Mammary epithelial cell (primary cell): ENCODE measurements at regions of chr3 and their contacts with region 1.

Region 1: DNA sequence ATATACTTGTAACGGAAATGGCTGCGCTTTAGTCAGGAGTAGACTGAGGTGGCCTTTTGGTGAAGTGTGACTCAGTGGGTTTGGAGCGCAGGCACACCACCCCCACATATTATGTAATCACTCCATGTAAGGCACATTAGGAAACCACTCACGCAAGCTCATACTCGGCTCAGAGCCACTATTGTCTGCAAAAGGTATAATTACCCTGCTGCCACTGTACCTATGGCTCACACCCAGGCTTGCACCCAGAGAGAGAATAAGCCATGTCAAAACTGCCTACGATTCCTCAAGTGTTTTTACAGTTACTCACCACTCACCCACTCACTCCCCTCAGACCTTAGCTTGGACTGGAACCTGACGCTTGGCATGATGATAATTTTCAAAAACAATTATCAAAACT is 611.9 kb upstream of the CCDC54 start:
- DNase-seq: peak; percentile 98
- H3K4me3 ChIP-seq: no peak overlapping the region
- H3K27ac ChIP-seq: peak overlapping the region; percentile 81
- H3K4me1 ChIP-seq: peaks cover 11% of the 10 kb centered on the region
- H3K27me3 ChIP-seq: no peaks in the 10 kb centered on the region
- CTCF ChIP-seq: no peak

Region 2: GRCh38 chr3:106688463-106688862 is 76.9 kb before region 1 on chr3:
- CTCF ChIA-PET with region 1: no interaction called
- dilution Hi-C with region 1: no loop called
- in situ Hi-C with region 1: no loop called
- intact Hi-C with region 1: loop called (anchors 10 kb)
- DNase-seq: peak; percentile 88
- H3K4me3 ChIP-seq: no peak overlapping the region
- H3K27ac ChIP-seq: no peak overlapping the region
- H3K4me1 ChIP-seq: peaks cover 20% of the 10 kb centered on the region
- H3K27me3 ChIP-seq: no peaks in the 10 kb centered on the region
- CTCF ChIP-seq: no peak

Region 3: GRCh38 chr3:106728315-106729098 is 36.8 kb before region 1 on chr3:
- CTCF ChIA-PET with region 1: no interaction called
- dilution Hi-C with region 1: no loop called
- in situ Hi-C with region 1: no loop called
- intact Hi-C with region 1: loop called (anchors 1 kb)
- DNase-seq: peak; percentile 95
- H3K4me3 ChIP-seq: peak overlapping the region; percentile 11 to 24 (median 16)
- H3K27ac ChIP-seq: peak overlapping the region; percentile 94
- H3K4me1 ChIP-seq: peaks cover 29% of the 10 kb centered on the region
- H3K27me3 ChIP-seq: no peaks in the 10 kb centered on the region
- CTCF ChIP-seq: no peak

Region 4: GRCh38 chr3:106824856-106825255 is 59.5 kb after region 1 on chr3:
- CTCF ChIA-PET with region 1: no interaction called
- dilution Hi-C with region 1: no loop called
- in situ Hi-C with region 1: no loop called
- intact Hi-C with region 1: loop called (anchors 5 kb)
- DNase-seq: peak; percentile 49
- H3K4me3 ChIP-seq: no peak overlapping the region
- H3K27ac ChIP-seq: no peak overlapping the region
- H3K4me1 ChIP-seq: peaks cover 6% of the 10 kb centered on the region
- H3K27me3 ChIP-seq: no peaks in the 10 kb centered on the region
- CTCF ChIP-seq: peak in 1 of 2 donors; percentile 42